ENCODE measurements at regions of chr12 and their contacts with region 1.

Region 1: GRCh38 chr12:26853303-26854030 is 20.5 kb upstream of the ITPR2 start:
- DNase-seq: peak; percentile 56 to 84 (median 63)
- ATAC-seq: peak; percentile 99
- H3K4me3 ChIP-seq: no peak overlapping the region
- H3K4me3 Mint-ChIP-seq: no peak overlapping the region
- H3K27ac ChIP-seq: no peak overlapping the region
- H3K27ac Mint-ChIP-seq: no peak overlapping the region
- H3K4me1 ChIP-seq: no peaks in the 10 kb centered on the region
- H3K4me1 Mint-ChIP-seq: no peaks in the 10 kb centered on the region
- H3K27me3 ChIP-seq: no peaks in the 10 kb centered on the region
- H3K27me3 Mint-ChIP-seq: peaks cover 4% of the 10 kb centered on the region
- CTCF ChIP-seq: peak; percentile 80

Region 2: DNA sequence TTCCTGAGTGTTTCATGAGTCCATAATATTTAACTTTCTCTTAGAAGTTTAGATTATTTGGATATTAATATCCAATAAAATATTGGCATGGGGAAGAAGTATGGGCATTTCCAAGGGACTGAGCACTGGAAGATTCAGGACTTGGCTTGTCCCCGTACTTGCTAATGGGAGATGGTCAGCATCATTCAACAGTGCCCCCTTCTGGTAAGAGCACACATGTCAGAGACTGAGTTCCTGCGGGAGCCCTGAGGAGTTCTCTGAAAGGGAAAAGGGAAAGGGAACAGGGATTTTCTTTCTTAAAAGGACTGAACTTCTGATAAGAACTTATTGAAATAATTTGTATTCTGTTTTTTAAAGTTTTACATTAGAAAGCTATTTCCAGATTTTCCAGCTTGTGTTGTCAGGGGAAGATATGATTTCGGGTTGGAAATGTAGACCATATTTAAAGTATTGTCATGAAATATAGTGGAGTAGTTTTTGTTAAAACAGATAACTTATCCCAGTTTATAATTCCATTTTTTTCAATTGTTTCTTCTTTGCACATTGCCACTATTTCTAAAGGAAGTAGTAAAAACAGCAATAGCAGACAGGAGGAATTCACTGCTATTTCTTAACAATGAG is 288.7 kb after region 1 on chr12:
- CTCF ChIA-PET with region 1: no interaction called
- POLR2A ChIA-PET with region 1: no interaction called
- intact Hi-C with region 1: loop called in 1 of 2 experiments (anchors 5 kb)
- DNase-seq: peak in 11 of 14 experiments; percentile 1 to 75 (median 17)
- ATAC-seq: no peak
- H3K4me3 ChIP-seq: no peak overlapping the region
- H3K4me3 Mint-ChIP-seq: no peak overlapping the region
- H3K27ac ChIP-seq: no peak overlapping the region
- H3K27ac Mint-ChIP-seq: no peak overlapping the region
- H3K4me1 ChIP-seq: peaks cover 4% of the 10 kb centered on the region
- H3K4me1 Mint-ChIP-seq: no peaks in the 10 kb centered on the region
- H3K27me3 ChIP-seq: no peaks in the 10 kb centered on the region
- H3K27me3 Mint-ChIP-seq: no peaks in the 10 kb centered on the region
- CTCF ChIP-seq: peak; percentile 82

Region 3: GRCh38 chr12:27703710-27704452 is 850.4 kb after region 1 on chr12:
- CTCF ChIA-PET with region 1: no interaction called
- POLR2A ChIA-PET with region 1: no interaction called
- intact Hi-C with region 1: loop called in 1 of 2 experiments (anchors 10 kb)
- DNase-seq: peak; percentile 38 to 80 (median 58)
- ATAC-seq: peak; percentile 99
- H3K4me3 ChIP-seq: no peak overlapping the region
- H3K4me3 Mint-ChIP-seq: no peak overlapping the region
- H3K27ac ChIP-seq: no peak overlapping the region
- H3K27ac Mint-ChIP-seq: no peak overlapping the region
- H3K4me1 ChIP-seq: no peaks in the 10 kb centered on the region
- H3K4me1 Mint-ChIP-seq: no peaks in the 10 kb centered on the region
- H3K27me3 ChIP-seq: no peaks in the 10 kb centered on the region
- H3K27me3 Mint-ChIP-seq: no peaks in the 10 kb centered on the region
- CTCF ChIP-seq: peak; percentile 76

Measured in CD4-positive, alpha-beta T cell (primary cell).